CD8-positive, alpha-beta T cell (primary cell): ENCODE measurements at regions of chr19 and their contacts with region 1.

Region 1: DNA sequence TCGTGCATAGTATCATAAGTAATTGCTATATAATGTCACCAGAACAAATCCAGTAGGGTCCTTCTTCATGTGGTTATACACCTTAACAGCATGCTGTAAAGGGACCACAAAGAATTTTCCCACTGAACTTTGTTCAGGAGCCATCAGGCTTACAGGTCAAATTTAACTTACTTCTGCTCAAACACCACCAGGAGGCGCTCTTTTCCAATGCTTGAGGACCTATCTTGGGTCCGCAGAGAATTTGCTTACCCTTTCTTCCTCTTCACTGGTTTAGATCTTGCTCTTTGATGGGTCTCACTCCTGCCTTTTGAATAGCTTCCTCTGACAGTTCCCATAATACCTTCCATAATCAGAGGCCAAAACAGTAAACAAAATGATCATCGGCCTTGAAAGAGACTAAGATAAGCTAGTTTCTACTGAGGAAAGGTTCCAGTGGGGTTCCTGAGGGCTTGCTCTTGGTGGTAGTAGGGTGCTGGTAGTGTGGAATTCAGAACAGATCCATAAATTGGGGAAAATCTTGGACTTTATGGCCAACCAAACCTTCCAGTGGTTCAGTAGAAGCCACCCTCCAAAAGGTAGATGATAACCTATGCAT is 37.4 kb downstream of the SCGB2B2 start:
- DNase-seq: peak; percentile 9 to 86 (median 66)
- ATAC-seq: peak; percentile 56
- H3K4me3 ChIP-seq: no peak overlapping the region
- H3K4me3 Mint-ChIP-seq: no peak overlapping the region
- H3K27ac ChIP-seq: no peak overlapping the region
- H3K27ac Mint-ChIP-seq: no peak overlapping the region
- H3K4me1 ChIP-seq: no peaks in the 10 kb centered on the region
- H3K4me1 Mint-ChIP-seq: no peaks in the 10 kb centered on the region
- H3K27me3 ChIP-seq: no peaks in the 10 kb centered on the region
- H3K27me3 Mint-ChIP-seq: no peaks in the 10 kb centered on the region
- CTCF ChIP-seq: peak; percentile 86

Region 2: DNA sequence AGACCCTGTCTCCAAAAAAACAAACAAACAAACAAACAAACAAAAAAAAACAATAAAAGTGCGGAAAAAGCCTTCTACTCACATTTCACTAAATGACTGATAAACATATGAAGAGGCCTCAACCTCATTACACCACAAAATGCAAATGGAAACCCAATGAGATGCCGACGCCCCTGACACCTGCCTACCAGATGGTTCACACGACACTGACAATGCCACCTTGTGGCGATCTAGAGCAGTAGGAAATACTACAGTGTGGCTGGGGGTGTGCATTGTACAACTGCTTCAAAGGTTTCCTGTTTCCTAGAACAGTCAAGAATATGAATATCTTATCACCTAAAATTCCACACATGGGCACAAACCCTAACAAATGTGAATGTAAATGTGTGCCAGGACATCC is 23.3 kb after region 1 on chr19:
- CTCF ChIA-PET with region 1: interaction called, 24 read pairs
- POLR2A ChIA-PET with region 1: no interaction called
- intact Hi-C with region 1: loop called (anchors 1 kb)
- DNase-seq: peak in 7 of 9 experiments; percentile 18 to 77 (median 35)
- ATAC-seq: peak; percentile 99
- H3K4me3 ChIP-seq: no peak overlapping the region
- H3K4me3 Mint-ChIP-seq: no peak overlapping the region
- H3K27ac ChIP-seq: no peak overlapping the region
- H3K27ac Mint-ChIP-seq: no peak overlapping the region
- H3K4me1 ChIP-seq: peaks cover 19% of the 10 kb centered on the region
- H3K4me1 Mint-ChIP-seq: peaks cover 26% of the 10 kb centered on the region
- H3K27me3 ChIP-seq: no peaks in the 10 kb centered on the region
- H3K27me3 Mint-ChIP-seq: peaks cover 3% of the 10 kb centered on the region
- CTCF ChIP-seq: peak; percentile 67

Region 3: DNA sequence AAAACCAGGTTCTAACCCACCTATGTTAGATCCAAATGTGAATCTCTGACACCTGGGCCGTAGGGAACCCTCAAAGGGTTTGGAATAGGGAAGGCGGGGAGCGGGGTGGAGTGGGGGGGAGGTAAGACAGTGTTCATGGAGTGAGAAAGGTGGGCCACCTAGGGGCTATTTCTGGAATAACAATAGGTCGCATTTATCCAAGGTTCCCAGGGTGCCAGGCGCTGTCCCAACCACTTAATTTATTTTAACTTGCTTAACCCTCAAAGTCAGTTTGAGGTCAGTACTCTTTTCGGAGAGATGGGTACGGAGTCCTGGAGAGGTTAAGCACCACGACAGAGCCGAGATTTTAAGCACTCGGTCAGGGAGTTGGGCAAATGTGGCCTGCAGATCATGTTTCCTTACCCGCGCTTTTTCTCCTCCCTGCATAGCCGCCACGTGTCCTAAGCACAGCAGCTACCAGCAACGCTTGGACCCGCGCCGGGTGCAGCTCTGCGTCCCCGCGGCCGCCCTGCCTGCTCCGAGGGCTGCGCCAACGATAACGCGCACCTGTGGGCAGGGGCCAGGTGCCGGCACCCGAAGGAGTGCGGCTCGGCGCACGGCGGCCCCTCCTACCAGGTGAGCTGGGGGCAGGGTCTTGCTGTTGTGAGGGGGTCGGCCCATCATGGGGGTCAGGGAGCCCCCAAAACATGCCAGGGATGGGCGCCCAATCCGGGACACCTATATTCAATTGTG is 451.1 kb after region 1 on chr19:
- CTCF ChIA-PET with region 1: no interaction called
- POLR2A ChIA-PET with region 1: no interaction called
- intact Hi-C with region 1: loop called in 1 of 2 experiments (anchors 5 kb)
- DNase-seq: peak in 7 of 9 experiments; percentile 4 to 72 (median 43)
- ATAC-seq: peak; percentile 84
- H3K4me3 ChIP-seq: no peak overlapping the region
- H3K4me3 Mint-ChIP-seq: no peak overlapping the region
- H3K27ac ChIP-seq: no peak overlapping the region
- H3K27ac Mint-ChIP-seq: no peak overlapping the region
- H3K4me1 ChIP-seq: peaks cover 16% of the 10 kb centered on the region
- H3K4me1 Mint-ChIP-seq: peaks cover 14% of the 10 kb centered on the region
- H3K27me3 ChIP-seq: peaks cover 0 to 2% of the 10 kb centered on the region in 2 experiments
- H3K27me3 Mint-ChIP-seq: peaks cover 4% of the 10 kb centered on the region
- CTCF ChIP-seq: peak; percentile 65